OCI-LY7 (cell line): ENCODE measurements at regions of chr1 and their contacts with region 1.

Region 1: DNA sequence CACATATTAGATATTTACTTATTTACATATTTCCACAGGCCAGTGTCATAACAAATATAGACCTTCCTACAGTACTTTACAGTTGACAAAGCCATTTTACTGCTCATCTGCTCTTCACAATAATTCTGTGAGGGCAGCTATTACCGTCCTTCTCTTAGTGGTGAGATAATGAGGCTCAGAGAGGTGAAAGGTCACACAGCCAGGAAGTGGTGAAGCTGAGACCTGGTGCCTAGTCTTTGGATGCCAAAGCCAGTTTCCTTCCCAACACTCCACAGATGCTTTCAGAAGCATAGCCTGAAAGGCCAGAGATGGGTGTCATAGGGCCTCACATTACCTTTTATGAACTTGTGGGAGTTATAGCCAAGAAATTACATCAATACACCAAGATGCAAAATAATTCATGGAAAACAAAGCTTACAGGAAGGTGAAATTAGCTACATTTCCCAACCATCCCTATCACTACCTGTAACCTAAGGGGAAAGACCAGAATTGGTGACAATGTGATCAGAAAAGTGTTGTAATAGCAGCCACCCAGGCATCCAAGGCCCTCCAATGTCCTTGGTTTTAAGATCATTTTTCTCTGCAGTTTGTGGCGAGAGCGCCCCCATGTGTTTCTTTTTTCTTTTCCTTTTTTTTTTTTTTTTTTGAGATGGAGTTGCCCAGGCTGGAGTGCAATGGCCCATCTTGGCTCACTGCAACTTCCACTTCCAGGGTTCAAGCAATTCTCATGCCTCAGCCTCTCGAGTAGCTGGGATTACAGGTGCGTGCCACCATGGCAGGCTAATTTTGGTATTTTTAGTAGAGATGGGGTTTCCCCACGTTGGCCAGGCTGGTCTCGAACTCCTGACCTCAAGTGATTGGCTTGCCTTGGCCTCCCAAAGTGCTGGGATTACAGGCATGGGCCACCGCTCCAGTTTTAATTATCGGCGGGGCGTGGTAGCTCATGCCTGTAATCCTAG is 26.5 kb upstream of the RPL11 start:
- DNase-seq: peak; percentile 81
- H3K4me3 ChIP-seq: no peak overlapping the region
- H3K27ac ChIP-seq: peak overlapping the region; percentile 70
- H3K4me1 ChIP-seq: peaks cover 50% of the 10 kb centered on the region
- CTCF ChIP-seq: peak; percentile 78

Region 2: GRCh38 chr1:23496490-23497181 is 168.5 kb before region 1 on chr1:
- CTCF ChIA-PET with region 1: no interaction called
- POLR2A ChIA-PET with region 1: interaction called, 4 read pairs
- intact Hi-C with region 1: loop called (anchors 1 kb)
- DNase-seq: no peak
- H3K4me3 ChIP-seq: no peak overlapping the region
- H3K27ac ChIP-seq: no peak overlapping the region
- H3K4me1 ChIP-seq: peaks cover 21% of the 10 kb centered on the region
- CTCF ChIP-seq: no peak

Region 3: DNA sequence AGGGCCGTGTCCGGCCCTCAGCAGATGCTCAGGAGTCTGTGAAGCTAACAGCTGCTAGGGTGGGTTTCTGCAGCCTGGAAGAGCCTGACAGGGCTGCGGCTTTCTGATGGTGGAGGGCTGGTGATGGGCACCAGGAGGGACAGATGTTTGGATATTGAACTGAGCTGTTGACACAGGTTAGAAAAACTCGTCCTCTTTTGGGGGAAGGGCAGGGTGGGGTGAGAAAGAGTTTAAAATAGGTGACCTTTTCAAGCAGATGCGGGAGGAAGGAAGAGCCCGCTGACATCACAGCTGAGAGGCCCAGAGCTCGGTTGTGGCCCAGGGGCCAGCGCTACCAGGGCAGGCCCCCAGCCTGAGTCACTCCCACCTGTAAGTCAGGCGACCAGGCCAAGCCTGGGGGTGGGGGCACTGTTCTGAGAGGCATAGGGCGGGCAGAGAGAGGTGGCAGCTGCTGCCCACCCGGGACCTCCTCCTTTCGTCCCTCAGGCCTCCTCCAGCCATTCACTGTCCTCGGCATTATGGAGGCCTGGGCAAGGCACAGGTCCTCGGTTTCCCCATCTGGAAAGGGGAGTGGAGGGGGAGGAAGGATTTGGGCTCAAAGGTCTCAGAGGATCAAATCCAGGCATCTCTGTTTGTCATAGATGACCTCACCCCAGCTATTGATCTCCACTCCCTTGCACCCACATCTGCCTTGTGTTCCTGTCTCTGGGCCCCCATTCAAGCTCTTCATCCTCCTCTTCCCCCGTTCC is 73.5 kb before region 1 on chr1:
- CTCF ChIA-PET with region 1: no interaction called
- POLR2A ChIA-PET with region 1: no interaction called
- intact Hi-C with region 1: no loop called
- DNase-seq: peak; percentile 90
- H3K4me3 ChIP-seq: peak overlapping the region; percentile 60
- H3K27ac ChIP-seq: peak overlapping the region; percentile 94
- H3K4me1 ChIP-seq: peaks cover 97% of the 10 kb centered on the region
- CTCF ChIP-seq: no peak

Region 4: GRCh38 chr1:23634842-23635651 is 30.1 kb before region 1 on chr1:
- CTCF ChIA-PET with region 1: interaction called, 7 read pairs
- POLR2A ChIA-PET with region 1: interaction called, 6 read pairs
- intact Hi-C with region 1: loop called (anchors 1 kb)
- DNase-seq: peak; percentile 82
- H3K4me3 ChIP-seq: peak overlapping the region; percentile 52
- H3K27ac ChIP-seq: peak overlapping the region; percentile 85
- H3K4me1 ChIP-seq: peaks cover 92% of the 10 kb centered on the region
- CTCF ChIP-seq: peak; percentile 93

Region 5: GRCh38 chr1:23751050-23751814 is 86.1 kb after region 1 on chr1:
- CTCF ChIA-PET with region 1: no interaction called
- POLR2A ChIA-PET with region 1: interaction called, 5 read pairs
- intact Hi-C with region 1: loop called (anchors 1 kb)
- DNase-seq: peak; percentile 76
- H3K4me3 ChIP-seq: no peak overlapping the region
- H3K27ac ChIP-seq: no peak overlapping the region
- H3K4me1 ChIP-seq: peaks cover 7% of the 10 kb centered on the region
- CTCF ChIP-seq: peak; percentile 92